HEK293 (cell line): ENCODE measurements at regions of chr13 and their contacts with region 1.

Region 1: DNA sequence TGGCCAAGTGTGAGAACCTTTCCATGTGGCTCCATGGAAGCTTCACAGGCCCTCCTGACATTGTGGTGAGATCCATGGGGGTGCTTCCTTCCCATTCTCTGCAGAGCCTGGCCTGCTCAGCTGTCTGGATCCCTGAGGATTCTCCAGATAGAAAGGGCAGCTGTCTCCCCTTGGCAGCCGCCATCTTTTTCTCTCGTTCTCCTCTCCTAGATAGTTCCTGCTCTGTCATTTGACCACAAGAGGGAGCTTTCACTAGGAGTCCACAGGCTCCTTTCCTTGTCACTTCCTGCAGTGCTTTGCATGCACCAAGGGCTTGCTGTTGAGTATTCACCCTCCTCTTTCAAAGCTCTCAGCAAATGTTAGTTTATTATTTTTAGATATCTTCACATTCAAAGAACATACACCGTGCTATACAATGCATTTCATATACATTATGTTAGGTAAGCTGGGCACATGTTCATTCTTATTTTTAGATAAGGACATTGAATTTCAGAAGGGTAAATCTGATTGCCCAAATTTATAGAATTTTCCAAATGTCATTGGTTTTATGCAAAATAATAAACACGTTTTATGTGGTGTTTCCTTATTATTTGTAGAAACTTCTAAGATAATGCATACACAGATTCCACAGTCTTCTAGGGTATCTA is 133.2 kb downstream of the FRY start:
- H3K4me3 ChIP-seq: no peak overlapping the region
- H3K27ac ChIP-seq: no peak overlapping the region
- H3K4me1 ChIP-seq: no peaks in the 10 kb centered on the region
- CTCF ChIP-seq: no peak

Region 2: GRCh38 chr13:31909864-31910551 is 254.7 kb before region 1 on chr13:
- CTCF ChIA-PET with region 1: interaction called, 24 read pairs
- POLR2A ChIA-PET with region 1: no interaction called
- H3K4me3 ChIP-seq: no peak overlapping the region
- H3K27ac ChIP-seq: no peak overlapping the region
- H3K4me1 ChIP-seq: no peaks in the 10 kb centered on the region
- CTCF ChIP-seq: no peak

Region 3: GRCh38 chr13:32139251-32139650 is 25.5 kb before region 1 on chr13:
- CTCF ChIA-PET with region 1: interaction called, 11 read pairs
- POLR2A ChIA-PET with region 1: no interaction called
- H3K4me3 ChIP-seq: no peak overlapping the region
- H3K27ac ChIP-seq: no peak overlapping the region
- H3K4me1 ChIP-seq: no peaks in the 10 kb centered on the region
- CTCF ChIP-seq: no peak

Region 4: DNA sequence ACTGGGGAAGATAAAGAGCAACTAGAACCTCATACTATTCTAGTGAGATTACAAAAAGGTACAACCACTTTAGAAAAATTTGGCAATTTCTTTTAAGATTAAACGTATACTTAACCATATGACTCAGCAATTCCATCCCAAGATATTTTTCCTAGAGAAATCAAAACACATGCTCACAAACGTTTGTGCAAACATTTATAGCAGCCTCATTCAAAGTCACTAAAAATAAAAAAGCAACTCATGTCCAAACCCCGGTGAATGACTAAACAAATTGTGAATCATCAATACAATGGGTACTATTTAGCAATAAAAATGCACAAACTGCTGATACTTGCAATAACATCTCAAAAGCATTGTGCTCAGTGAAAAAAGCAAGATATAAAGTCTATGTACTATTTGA is 11.7 kb before region 1 on chr13:
- CTCF ChIA-PET with region 1: interaction called, 12 read pairs
- POLR2A ChIA-PET with region 1: no interaction called
- H3K4me3 ChIP-seq: no peak overlapping the region
- H3K27ac ChIP-seq: no peak overlapping the region
- H3K4me1 ChIP-seq: no peaks in the 10 kb centered on the region
- CTCF ChIP-seq: no peak

Region 5: GRCh38 chr13:32175943-32176342 is 11.2 kb after region 1 on chr13:
- CTCF ChIA-PET with region 1: interaction called, 17 read pairs
- POLR2A ChIA-PET with region 1: no interaction called
- H3K4me3 ChIP-seq: no peak overlapping the region
- H3K27ac ChIP-seq: no peak overlapping the region
- H3K4me1 ChIP-seq: no peaks in the 10 kb centered on the region
- CTCF ChIP-seq: no peak

Region 6: DNA sequence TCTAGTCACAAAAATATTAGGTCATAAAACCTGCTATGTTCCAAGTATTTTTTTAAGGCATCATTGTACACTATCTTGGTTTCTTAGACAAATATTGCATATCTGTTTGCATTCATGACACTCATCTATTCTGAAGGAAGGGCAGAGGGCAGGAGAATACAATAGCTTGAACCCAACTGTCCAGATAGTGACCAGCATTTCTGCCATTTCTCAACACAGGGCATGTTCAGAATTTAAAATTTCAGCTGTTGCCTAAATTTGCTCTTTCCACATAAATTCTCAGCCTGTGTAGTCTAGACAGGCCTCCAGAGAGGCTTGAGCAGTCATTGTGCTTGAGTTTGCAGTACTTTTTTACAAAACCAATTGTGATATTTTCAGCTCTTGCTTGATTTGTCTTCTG is 31.0 kb after region 1 on chr13:
- CTCF ChIA-PET with region 1: interaction called, 19 read pairs
- POLR2A ChIA-PET with region 1: no interaction called
- H3K4me3 ChIP-seq: no peak overlapping the region
- H3K27ac ChIP-seq: no peak overlapping the region
- H3K4me1 ChIP-seq: no peaks in the 10 kb centered on the region
- CTCF ChIP-seq: no peak

Region 7: DNA sequence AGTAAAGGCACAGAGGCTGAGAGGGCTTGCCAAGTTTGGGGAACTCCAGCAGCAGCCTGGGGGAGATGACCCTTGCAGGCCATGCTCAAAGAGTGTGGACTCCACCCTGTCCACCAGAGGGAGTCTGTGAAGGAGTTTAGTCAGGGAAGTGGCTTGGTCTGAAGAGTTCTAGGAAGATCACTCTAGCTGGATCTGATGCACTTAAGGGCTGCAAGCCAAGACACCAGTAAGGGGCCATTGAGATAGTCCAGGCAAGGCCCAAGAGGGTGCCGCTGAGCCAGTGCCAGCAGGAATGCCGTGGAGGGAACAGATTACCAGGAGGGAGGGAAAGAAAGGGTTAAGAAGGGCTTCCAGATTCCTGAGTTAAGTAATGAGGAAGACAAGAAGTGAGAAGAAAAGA is 81.7 kb after region 1 on chr13:
- CTCF ChIA-PET with region 1: interaction called, 15 read pairs
- POLR2A ChIA-PET with region 1: no interaction called
- H3K4me3 ChIP-seq: no peak overlapping the region
- H3K27ac ChIP-seq: no peak overlapping the region
- H3K4me1 ChIP-seq: no peaks in the 10 kb centered on the region
- CTCF ChIP-seq: peak; percentile 50; the same call in 1 of the 2 replicates